Activated CD8-positive, alpha-beta memory T cell treated with anti-CD3 and anti-CD28 coated beads, Interleukin-2, amount 10 ng/mL, durations not matched to agents 7 days and 5 days (primary cell): ENCODE measurements at regions of chr16 and their contacts with region 1.

Region 1: GRCh38 chr16:46689365-46690280 is at the start of gene ORC6:
- DNase-seq: peak; percentile 98
- ATAC-seq: peak; percentile 84
- H3K4me3 Mint-ChIP-seq: no peak within 1 kb of the TSS
- H3K27ac Mint-ChIP-seq: no peak within 1 kb of the TSS
- H3K4me1 Mint-ChIP-seq: peaks cover 48% of the 10 kb centered on the region
- H3K27me3 Mint-ChIP-seq: no peaks in the 10 kb centered on the region
- total RNA-seq, gene ORC6: 59.0 to 61.3 TPM

Region 2: GRCh38 chr16:46649928-46650623 is 39.5 kb before region 1 on chr16:
- CTCF ChIA-PET with region 1: no interaction called
- DNase-seq: no peak
- ATAC-seq: no peak
- H3K4me3 Mint-ChIP-seq: no peak overlapping the region
- H3K27ac Mint-ChIP-seq: no peak overlapping the region
- H3K4me1 Mint-ChIP-seq: no peaks in the 10 kb centered on the region
- H3K27me3 Mint-ChIP-seq: no peaks in the 10 kb centered on the region

Region 3: GRCh38 chr16:46673320-46674013 is 16.2 kb before region 1 on chr16:
- CTCF ChIA-PET with region 1: interaction called, 14 read pairs
- DNase-seq: peak; percentile 66
- ATAC-seq: peak; percentile 97
- H3K4me3 Mint-ChIP-seq: no peak overlapping the region
- H3K27ac Mint-ChIP-seq: no peak overlapping the region
- H3K4me1 Mint-ChIP-seq: no peaks in the 10 kb centered on the region
- H3K27me3 Mint-ChIP-seq: no peaks in the 10 kb centered on the region